Naive thymus-derived CD4-positive, alpha-beta T cell (primary cell): ENCODE measurements at regions of chr2 and their contacts with region 1.

Region 1: GRCh38 chr2:84881581-84882414 is 914 bp upstream of the TRABD2A start:
- DNase-seq: peak; percentile 69 to 89 (median 85)
- ATAC-seq: peak; percentile 80
- H3K4me3 ChIP-seq: peak overlapping the region; percentile 80
- H3K4me3 Mint-ChIP-seq: peak overlapping the region; percentile 84 to 99 (median 97)
- H3K27ac ChIP-seq: peak overlapping the region; percentile 89
- H3K27ac Mint-ChIP-seq: peak overlapping the region; percentile 92 to 99 (median 98)
- H3K4me1 ChIP-seq: peaks cover 5 to 20% of the 10 kb centered on the region in 2 donors
- H3K4me1 Mint-ChIP-seq: peaks cover 35 to 65% (median 61%) of the 10 kb centered on the region in 7 donors
- H3K27me3 ChIP-seq: no peaks in the 10 kb centered on the region
- H3K27me3 Mint-ChIP-seq: peaks cover 0 to 3% (median 0%) of the 10 kb centered on the region in 5 donors

Region 2: DNA sequence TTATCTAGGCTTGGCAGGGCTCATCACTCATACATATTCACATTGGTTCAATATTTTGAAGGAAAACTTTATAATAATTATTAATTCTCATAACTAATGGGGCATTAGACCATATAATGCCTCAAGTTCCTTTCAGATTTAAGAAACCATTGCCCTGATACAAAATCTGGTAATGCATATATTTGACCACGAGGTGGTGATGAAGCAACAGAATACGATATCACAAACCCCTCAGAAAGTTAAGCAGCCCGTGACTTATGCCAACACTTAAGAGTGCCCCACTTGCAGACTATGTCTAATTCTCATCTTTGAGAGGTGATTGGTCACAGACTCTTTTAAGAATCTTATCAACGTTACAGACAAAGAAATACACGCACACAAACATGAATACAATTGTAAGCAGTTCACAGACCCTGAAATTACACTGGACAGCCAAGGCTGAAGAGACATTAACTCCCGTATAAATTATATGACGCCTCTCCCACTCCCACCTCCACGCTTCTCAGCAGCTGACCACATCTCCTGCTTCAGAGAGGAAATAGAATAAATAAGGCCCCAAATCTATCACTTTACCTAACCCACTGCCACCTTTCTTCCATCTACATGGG is 386.2 kb before region 1 on chr2:
- CTCF ChIA-PET with region 1: interaction called, 12 read pairs
- POLR2A ChIA-PET with region 1: interaction called, 13 read pairs
- intact Hi-C with region 1: loop called (anchors 1 kb)
- DNase-seq: peak in 7 of 9 donors; percentile 61 to 81 (median 73)
- ATAC-seq: peak; percentile 96
- H3K4me3 ChIP-seq: no peak overlapping the region
- H3K4me3 Mint-ChIP-seq: peak overlapping the region in 1 of 10 donors; percentile 23
- H3K27ac ChIP-seq: no peak overlapping the region
- H3K27ac Mint-ChIP-seq: peak overlapping the region in 7 of 9 donors; percentile 35 to 82 (median 76)
- H3K4me1 ChIP-seq: peaks cover 0 to 5% of the 10 kb centered on the region in 2 donors
- H3K4me1 Mint-ChIP-seq: peaks cover 9 to 31% (median 28%) of the 10 kb centered on the region in 7 donors
- H3K27me3 ChIP-seq: no peaks in the 10 kb centered on the region
- H3K27me3 Mint-ChIP-seq: peaks cover 0 to 14% (median 0%) of the 10 kb centered on the region in 5 donors

Region 3: GRCh38 chr2:84631047-84631446 is 250.8 kb before region 1 on chr2:
- CTCF ChIA-PET with region 1: interaction called, 6 read pairs
- POLR2A ChIA-PET with region 1: no interaction called
- intact Hi-C with region 1: loop called in 1 of 2 experiments (anchors 1 kb)
- DNase-seq: peak in 6 of 9 donors; percentile 21 to 57 (median 50)
- ATAC-seq: peak; percentile 69
- H3K4me3 ChIP-seq: no peak overlapping the region
- H3K4me3 Mint-ChIP-seq: peak overlapping the region in 4 of 10 donors; percentile 5 to 60 (median 34)
- H3K27ac ChIP-seq: no peak overlapping the region
- H3K27ac Mint-ChIP-seq: peak overlapping the region in 5 of 9 donors; percentile 12 to 80 (median 33)
- H3K4me1 ChIP-seq: peaks cover 0 to 15% of the 10 kb centered on the region in 2 donors
- H3K4me1 Mint-ChIP-seq: peaks cover 16 to 56% (median 52%) of the 10 kb centered on the region in 7 donors
- H3K27me3 ChIP-seq: no peaks in the 10 kb centered on the region
- H3K27me3 Mint-ChIP-seq: peaks cover 0 to 2% (median 0%) of the 10 kb centered on the region in 5 donors

Region 4: DNA sequence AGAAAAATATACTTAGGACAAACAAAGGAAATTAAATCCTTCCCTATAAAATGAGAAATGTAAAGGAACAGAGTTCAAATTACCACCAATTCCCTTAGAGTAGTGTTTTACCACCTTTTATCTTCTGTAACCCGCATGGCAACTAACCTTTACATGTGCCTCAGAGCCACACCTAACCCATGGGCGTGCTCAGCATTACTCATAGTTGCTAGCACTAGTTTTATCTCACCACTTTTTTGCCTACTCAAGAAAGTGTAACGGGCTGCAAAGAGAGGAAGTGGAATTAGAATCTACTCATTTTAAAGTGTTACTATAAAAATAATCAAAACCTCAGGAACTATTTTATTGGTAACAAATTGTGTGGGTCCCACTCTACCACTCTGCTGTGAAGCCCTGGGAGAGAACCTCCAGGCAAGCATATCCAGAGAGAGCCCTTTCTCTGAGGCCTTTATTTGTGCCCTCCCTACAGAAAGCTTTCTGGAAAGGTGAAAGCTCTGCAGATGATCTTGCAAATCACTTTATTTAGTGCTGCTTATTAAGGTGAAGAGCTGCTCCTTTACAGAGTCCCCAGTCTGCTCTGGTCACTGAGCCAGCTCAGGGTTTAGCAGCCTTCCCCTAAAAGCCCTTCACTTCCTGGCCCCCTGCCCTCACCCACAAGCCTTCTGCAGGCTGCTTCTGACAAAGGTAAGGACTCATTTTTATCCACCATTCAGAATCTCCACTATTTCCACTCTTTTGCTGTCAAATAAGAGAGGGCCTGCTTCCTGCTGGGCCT is 99.7 kb before region 1 on chr2:
- CTCF ChIA-PET with region 1: interaction called, 3 read pairs
- POLR2A ChIA-PET with region 1: interaction called, 17 read pairs
- intact Hi-C with region 1: loop called in 1 of 2 experiments (anchors 1 kb)
- DNase-seq: peak in 8 of 9 donors; percentile 29 to 72 (median 57)
- ATAC-seq: peak; percentile 87
- H3K4me3 ChIP-seq: peak overlapping the region; percentile 18
- H3K4me3 Mint-ChIP-seq: peak overlapping the region in 9 of 10 donors; percentile 54 to 85 (median 73)
- H3K27ac ChIP-seq: peak overlapping the region; percentile 64
- H3K27ac Mint-ChIP-seq: peak overlapping the region; percentile 84 to 96 (median 91)
- H3K4me1 ChIP-seq: peaks cover 52 to 75% of the 10 kb centered on the region in 2 donors
- H3K4me1 Mint-ChIP-seq: peaks cover 50 to 92% (median 87%) of the 10 kb centered on the region in 7 donors
- H3K27me3 ChIP-seq: no peaks in the 10 kb centered on the region
- H3K27me3 Mint-ChIP-seq: no peaks in the 10 kb centered on the region

Region 5: GRCh38 chr2:84856787-84857186 is 25.0 kb before region 1 on chr2:
- CTCF ChIA-PET with region 1: interaction called, 4 read pairs
- POLR2A ChIA-PET with region 1: interaction called, 69 read pairs
- intact Hi-C with region 1: loop called in 1 of 2 experiments (anchors 1 kb)
- DNase-seq: peak in 2 of 9 donors; percentile 31 to 49
- ATAC-seq: peak; percentile 73
- H3K4me3 ChIP-seq: no peak overlapping the region
- H3K4me3 Mint-ChIP-seq: peak overlapping the region; percentile 54 to 89 (median 85)
- H3K27ac ChIP-seq: peak overlapping the region; percentile 72
- H3K27ac Mint-ChIP-seq: peak overlapping the region; percentile 85 to 99 (median 96)
- H3K4me1 ChIP-seq: peaks cover 53 to 95% of the 10 kb centered on the region in 2 donors
- H3K4me1 Mint-ChIP-seq: peaks cover 72 to 98% (median 96%) of the 10 kb centered on the region in 7 donors
- H3K27me3 ChIP-seq: no peaks in the 10 kb centered on the region
- H3K27me3 Mint-ChIP-seq: no peaks in the 10 kb centered on the region

Region 6: GRCh38 chr2:84894758-84895520 is 13.1 kb after region 1 on chr2:
- CTCF ChIA-PET with region 1: interaction called, 8 read pairs
- POLR2A ChIA-PET with region 1: interaction called, 617 read pairs
- intact Hi-C with region 1: loop called in 1 of 2 experiments (anchors 1 kb)
- DNase-seq: peak in 6 of 9 donors; percentile 36 to 61 (median 53)
- ATAC-seq: peak; percentile 70
- H3K4me3 ChIP-seq: peak overlapping the region; percentile 40
- H3K4me3 Mint-ChIP-seq: peak overlapping the region; percentile 47 to 82 (median 71)
- H3K27ac ChIP-seq: peak overlapping the region; percentile 77
- H3K27ac Mint-ChIP-seq: peak overlapping the region; percentile 53 to 99 (median 93)
- H3K4me1 ChIP-seq: peaks cover 37 to 47% of the 10 kb centered on the region in 2 donors
- H3K4me1 Mint-ChIP-seq: peaks cover 40 to 71% (median 64%) of the 10 kb centered on the region in 7 donors
- H3K27me3 ChIP-seq: no peaks in the 10 kb centered on the region
- H3K27me3 Mint-ChIP-seq: no peaks in the 10 kb centered on the region